HAP-1 (cell line): ENCODE measurements at regions of chr14 and their contacts with region 1.

Region 1: GRCh38 chr14:33839193-33840076 is 111.4 kb downstream of the EGLN3 start:
- DNase-seq: peak; percentile 56 to 67
- H3K4me3 ChIP-seq: no peak overlapping the region
- H3K4me1 ChIP-seq: peaks cover 21% of the 10 kb centered on the region
- H3K27me3 ChIP-seq: no peaks in the 10 kb centered on the region

Region 2: DNA sequence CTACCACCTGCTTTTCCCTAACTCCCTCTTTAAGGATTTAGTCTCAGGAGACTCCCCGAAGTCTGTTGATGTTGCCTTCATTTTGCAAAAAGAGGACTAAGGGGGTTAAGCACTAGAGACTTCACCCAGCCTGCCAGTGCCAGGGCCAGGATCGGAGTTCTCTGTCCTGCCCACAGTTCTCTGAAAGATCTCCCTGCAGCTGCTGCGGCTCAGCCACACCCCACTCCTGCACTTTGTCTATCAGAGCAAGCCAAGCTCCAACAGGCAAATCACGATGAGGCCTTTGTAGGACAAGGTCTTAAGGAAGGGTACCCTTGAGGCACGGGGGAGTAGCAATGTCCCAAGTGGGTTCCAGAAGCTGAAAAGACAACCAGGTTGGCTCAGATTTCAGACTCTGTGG is 260.2 kb after region 1 on chr14:
- in situ Hi-C with region 1: loop called (anchors 10 kb)
- DNase-seq: no peak
- H3K4me3 ChIP-seq: no peak overlapping the region
- H3K4me1 ChIP-seq: peaks cover 13% of the 10 kb centered on the region
- H3K27me3 ChIP-seq: no peaks in the 10 kb centered on the region

Region 3: DNA sequence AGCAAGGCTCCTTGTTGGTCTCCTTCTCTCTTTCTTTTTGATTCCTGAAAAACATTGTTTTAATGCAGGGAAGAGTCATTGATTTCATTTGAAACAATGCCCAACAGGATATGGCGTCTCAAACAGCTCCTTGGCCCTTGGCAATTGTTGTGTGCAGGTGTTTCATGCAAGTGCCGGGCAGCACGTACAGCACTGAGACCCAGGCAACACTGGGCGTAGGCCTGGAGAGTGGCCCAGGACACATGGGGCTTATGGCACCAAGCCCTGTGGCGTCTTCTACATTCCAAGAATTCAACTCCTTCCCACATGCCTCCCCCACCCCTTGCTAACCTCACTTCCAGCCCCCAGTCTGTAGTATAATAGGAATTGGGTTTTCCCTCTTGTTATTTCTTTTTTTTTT is 392.2 kb after region 1 on chr14:
- in situ Hi-C with region 1: loop called (anchors 10 kb)
- DNase-seq: no peak
- H3K4me3 ChIP-seq: no peak overlapping the region
- H3K4me1 ChIP-seq: peaks cover 13% of the 10 kb centered on the region
- H3K27me3 ChIP-seq: no peaks in the 10 kb centered on the region

Region 4: DNA sequence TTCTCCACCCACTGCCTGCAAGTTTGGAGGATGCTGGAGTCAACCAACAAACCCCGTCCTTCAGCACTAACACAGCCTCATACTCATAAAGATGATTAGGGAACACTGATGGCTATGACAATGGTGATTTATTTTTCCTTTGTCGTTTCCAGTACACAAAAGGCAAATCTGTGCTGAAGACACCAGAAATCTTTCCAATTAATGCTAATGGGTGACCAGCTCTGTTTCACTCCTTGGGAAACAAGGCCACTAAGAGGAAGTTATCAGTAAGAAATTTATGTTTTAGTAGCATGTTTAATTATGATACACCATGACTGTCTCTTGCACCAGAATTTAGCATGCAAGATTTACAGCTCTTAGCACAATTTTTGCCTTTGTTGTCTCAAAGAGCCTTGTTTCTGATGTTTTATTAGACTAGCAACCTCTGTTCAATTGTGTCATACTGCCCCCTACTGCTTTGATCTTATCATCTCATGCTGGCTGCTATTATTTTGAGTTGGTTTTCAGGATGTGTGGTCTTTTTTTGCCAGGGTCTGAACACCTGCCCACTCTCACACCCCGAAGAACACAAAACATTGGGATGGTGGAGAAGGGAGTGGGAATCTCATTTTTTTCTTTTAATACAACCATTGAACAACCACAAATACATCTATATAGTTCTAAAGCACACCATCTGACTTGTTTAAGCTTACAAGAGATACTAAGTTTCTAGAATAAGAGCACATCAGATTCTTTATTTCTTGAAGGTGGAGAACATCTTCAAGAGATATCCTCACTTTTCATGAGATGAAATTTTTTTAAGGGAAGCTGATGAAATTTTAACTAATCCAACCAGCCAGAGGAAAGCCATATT is 461.7 kb after region 1 on chr14:
- in situ Hi-C with region 1: loop called (anchors 10 kb)
- DNase-seq: peak; percentile 61 to 65
- H3K4me3 ChIP-seq: no peak overlapping the region
- H3K4me1 ChIP-seq: peaks cover 4% of the 10 kb centered on the region; the same call in 1 of the 2 replicates
- H3K27me3 ChIP-seq: no peaks in the 10 kb centered on the region